Left ventricle myocardium inferior (tissue), 1 donor: ENCODE measurements at regions of chr3 and their contacts with region 1.

Region 1: DNA sequence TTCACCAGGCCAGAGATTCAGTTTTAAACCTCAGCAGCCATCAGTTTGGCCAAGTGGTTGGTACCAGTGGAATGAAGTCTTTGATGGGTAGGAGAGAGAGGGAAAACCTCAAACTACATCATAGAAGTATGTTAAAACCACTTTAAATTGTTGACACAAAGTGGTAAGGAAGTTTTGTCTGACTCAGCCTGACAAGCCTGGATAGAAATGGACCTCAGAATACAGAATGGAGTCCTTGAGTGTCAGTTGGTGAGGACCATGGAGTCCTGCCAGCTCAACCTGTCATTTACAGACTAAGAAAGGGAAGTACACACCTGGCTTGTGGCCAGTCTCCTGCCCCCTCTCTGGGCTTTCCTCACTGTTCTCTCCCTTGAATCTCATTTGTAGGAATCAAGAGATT is 12.1 kb downstream of the EAF1 start:
- DNase-seq: no peak
- H3K4me3 ChIP-seq: no peak overlapping the region
- H3K27ac ChIP-seq: no peak overlapping the region
- H3K4me1 ChIP-seq: peaks cover 11% of the 10 kb centered on the region
- H3K27me3 ChIP-seq: no peaks in the 10 kb centered on the region
- CTCF ChIP-seq: no peak

Region 2: DNA sequence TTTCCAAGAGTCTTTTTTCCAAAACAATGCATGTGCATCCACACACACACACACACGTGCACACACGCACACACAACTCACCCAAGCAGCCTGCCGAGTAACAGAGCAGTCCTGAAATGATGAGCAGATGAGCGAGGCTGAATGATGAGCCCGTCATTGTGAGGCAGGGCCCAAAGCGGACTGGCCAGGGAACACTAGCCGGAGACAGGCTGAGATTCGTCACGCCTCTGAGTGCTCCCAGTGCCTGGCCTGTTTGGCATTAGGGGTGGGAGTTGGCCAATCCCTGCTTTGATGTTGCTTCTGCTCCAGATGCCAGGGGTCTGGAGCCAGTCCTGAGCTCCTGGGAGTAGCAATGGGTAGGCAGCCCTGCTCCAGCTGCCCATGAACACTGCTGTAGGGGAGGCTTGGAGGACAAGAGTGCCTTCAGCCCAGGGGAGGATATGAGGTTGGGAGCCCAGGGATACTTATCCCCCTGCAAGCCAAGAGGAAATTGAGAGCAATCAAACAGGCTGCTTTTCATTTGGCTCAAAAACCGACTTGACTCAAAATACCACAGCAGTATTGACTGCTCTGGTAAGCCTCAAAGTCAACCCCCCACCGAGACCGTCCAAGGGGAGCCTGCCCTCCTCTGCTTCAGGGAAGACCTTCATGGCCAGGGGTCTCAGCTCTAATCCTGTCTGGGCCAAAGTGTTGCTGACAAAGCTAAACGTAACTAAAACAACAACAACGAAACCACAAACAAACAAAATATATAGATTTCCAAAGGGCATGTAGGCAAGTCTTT is 59.1 kb after region 1 on chr3:
- intact Hi-C with region 1: no loop called
- DNase-seq: no peak
- H3K4me3 ChIP-seq: no peak overlapping the region
- H3K27ac ChIP-seq: no peak overlapping the region
- H3K4me1 ChIP-seq: peaks cover 54% of the 10 kb centered on the region
- H3K27me3 ChIP-seq: no peaks in the 10 kb centered on the region
- CTCF ChIP-seq: no peak

Region 3: GRCh38 chr3:15578289-15578867 is 138.9 kb after region 1 on chr3:
- intact Hi-C with region 1: loop called (anchors 10 kb)
- DNase-seq: no peak
- H3K4me3 ChIP-seq: no peak overlapping the region
- H3K27ac ChIP-seq: no peak overlapping the region
- H3K4me1 ChIP-seq: peaks cover 4% of the 10 kb centered on the region
- H3K27me3 ChIP-seq: no peaks in the 10 kb centered on the region
- CTCF ChIP-seq: no peak

Region 4: DNA sequence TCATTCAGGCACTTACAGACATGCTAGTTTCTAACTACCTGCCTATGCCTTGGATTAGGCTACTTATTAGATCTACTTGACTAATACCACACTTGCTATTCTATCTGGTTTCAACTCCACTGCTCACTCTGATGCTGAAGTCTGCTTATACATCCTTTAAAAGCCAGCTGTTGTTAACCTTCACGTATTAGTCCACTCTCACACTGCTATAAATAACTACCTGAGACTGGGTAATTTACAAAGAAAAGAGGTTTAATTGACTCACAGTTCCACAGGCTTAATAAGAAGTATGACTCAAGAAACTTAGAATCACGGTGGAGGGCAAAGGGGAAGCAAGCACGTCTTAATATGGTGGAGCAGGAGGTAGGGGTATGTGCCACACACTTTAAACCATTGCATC is 406.0 kb after region 1 on chr3:
- intact Hi-C with region 1: no loop called
- DNase-seq: no peak
- H3K4me3 ChIP-seq: no peak overlapping the region
- H3K27ac ChIP-seq: no peak overlapping the region
- H3K4me1 ChIP-seq: peaks cover 13% of the 10 kb centered on the region
- H3K27me3 ChIP-seq: no peaks in the 10 kb centered on the region
- CTCF ChIP-seq: no peak

Region 5: DNA sequence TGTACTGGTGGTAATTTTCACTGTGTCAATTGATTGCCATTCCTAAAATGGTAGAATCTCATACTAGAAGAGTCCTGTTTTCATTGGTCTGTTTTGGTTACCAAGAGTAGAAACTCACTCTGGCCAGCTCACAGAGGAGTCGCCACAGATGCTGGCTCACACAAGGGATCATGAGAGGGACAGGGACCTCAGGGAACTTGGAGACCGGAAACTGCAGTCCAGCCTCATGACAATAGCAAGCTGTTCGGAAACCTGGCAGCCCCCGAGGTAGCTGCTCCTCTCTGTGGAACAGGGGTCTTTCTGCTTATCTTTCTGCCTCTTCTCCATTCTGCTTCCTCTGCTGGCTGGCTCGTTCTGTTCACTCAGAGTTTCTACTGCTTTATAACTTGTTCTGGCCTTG is 1638.1 kb after region 1 on chr3:
- intact Hi-C with region 1: no loop called
- DNase-seq: peak; percentile 41
- H3K4me3 ChIP-seq: no peak overlapping the region
- H3K27ac ChIP-seq: peak overlapping the region; percentile 80
- H3K4me1 ChIP-seq: peaks cover 44% of the 10 kb centered on the region
- H3K27me3 ChIP-seq: no peaks in the 10 kb centered on the region
- CTCF ChIP-seq: no peak